ENCODE measurements at regions of chr1 and their contacts with region 1.

Region 1: DNA sequence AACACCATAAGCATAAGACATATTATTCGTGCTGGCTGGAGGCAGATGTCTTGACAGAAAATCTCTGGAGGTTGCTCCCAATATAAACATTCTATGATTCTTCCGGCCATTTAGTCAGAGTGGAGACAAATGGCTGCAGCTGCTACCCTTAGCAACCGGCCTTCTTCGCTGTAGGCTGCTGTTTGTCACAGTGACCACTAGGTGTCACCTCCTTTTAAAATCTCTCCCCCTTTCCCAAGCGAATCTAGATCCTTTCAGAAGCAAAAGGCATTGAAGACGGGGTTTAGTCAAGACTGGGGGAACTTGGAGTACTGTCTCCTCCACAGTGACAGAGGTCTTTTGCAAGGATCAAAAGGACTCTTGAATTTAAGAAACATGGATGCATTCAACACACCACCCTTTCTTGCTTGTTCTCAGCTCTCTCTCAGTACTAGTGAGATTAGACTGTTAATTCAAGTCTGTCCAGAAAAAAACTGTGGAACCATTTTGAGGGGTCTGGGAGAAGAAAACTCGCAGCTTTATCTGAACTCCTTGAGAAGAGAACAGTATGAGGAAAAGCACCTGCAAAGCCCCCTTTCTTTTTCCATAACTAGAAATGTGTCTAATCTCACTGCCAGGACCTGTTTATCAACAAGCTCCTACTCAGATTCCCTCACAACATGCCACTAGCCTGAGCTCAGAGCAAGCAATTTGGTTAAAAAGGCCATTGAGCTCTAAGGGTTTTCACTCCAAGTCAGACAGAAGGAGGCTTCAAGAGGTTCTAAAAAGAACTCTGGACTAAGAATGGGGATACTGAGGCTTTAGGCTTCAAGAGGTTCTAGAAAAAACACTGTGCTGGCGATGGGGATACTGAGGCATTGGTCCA is 408.3 kb upstream of the PLXNA2 start:
- DNase-seq: peak; percentile 49
- ATAC-seq: no peak
- H3K4me3 Mint-ChIP-seq: no peak overlapping the region
- H3K27ac Mint-ChIP-seq: no peak overlapping the region
- H3K4me1 Mint-ChIP-seq: no peaks in the 10 kb centered on the region
- H3K27me3 Mint-ChIP-seq: peaks cover 31% of the 10 kb centered on the region

Region 2: GRCh38 chr1:209190591-209191261 is 538.2 kb after region 1 on chr1:
- CTCF ChIA-PET with region 1: no interaction called
- POLR2A ChIA-PET with region 1: no interaction called
- intact Hi-C with region 1: loop called in 1 of 2 experiments (anchors 1 kb)
- DNase-seq: peak; percentile 59
- ATAC-seq: peak; percentile 53
- H3K4me3 Mint-ChIP-seq: no peak overlapping the region
- H3K27ac Mint-ChIP-seq: no peak overlapping the region
- H3K4me1 Mint-ChIP-seq: no peaks in the 10 kb centered on the region
- H3K27me3 Mint-ChIP-seq: peaks cover 18% of the 10 kb centered on the region

Region 3: GRCh38 chr1:209248649-209249279 is 596.2 kb after region 1 on chr1:
- CTCF ChIA-PET with region 1: interaction called, 6 read pairs
- POLR2A ChIA-PET with region 1: no interaction called
- intact Hi-C with region 1: loop called (anchors 1 to 10 kb)
- DNase-seq: peak; percentile 64
- ATAC-seq: peak; percentile 63
- H3K4me3 Mint-ChIP-seq: no peak overlapping the region
- H3K27ac Mint-ChIP-seq: no peak overlapping the region
- H3K4me1 Mint-ChIP-seq: no peaks in the 10 kb centered on the region
- H3K27me3 Mint-ChIP-seq: no peaks in the 10 kb centered on the region

Region 4: DNA sequence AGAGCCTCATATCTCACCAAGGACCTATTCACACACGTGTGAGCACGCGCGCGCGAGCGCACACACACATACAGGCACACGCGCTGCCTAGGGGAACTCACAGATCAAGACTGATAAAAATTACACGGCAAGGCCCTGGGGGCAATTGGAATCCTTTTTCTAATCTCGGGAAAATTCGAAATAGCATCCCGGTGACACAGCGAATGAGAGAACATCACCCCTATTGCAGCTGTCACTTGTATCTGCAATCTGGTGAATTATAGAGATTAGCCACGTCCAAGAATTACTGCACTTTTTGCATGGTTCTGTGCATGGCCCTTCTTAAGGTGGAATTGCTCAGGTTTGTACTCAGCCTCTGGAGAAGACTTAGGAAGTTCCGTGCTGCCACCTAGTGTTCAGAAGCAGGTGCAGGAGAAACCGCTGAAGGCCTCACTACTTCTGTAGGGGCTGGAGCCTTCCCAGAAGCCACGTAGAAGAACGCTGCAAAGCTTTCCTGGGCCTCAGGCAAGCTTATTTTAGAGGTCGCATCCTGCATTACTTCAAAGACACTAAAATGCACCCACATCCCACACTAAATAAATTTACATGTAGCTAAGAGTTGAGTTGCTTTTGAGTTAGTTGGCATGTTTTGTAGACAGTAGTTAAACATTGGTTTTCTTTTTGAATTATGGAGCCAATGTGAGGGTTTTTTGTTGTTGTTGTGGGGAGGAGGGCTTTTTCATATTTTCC is 701.7 kb after region 1 on chr1:
- CTCF ChIA-PET with region 1: interaction called, 3 read pairs
- POLR2A ChIA-PET with region 1: no interaction called
- intact Hi-C with region 1: loop called in 1 of 2 experiments (anchors 1 kb)
- DNase-seq: peak; percentile 75
- ATAC-seq: peak; percentile 82
- H3K4me3 Mint-ChIP-seq: no peak overlapping the region
- H3K27ac Mint-ChIP-seq: no peak overlapping the region
- H3K4me1 Mint-ChIP-seq: no peaks in the 10 kb centered on the region
- H3K27me3 Mint-ChIP-seq: no peaks in the 10 kb centered on the region